Astrocyte of the cerebellum (primary cell): ENCODE measurements at regions of chr12 and their contacts with region 1.

Region 1: DNA sequence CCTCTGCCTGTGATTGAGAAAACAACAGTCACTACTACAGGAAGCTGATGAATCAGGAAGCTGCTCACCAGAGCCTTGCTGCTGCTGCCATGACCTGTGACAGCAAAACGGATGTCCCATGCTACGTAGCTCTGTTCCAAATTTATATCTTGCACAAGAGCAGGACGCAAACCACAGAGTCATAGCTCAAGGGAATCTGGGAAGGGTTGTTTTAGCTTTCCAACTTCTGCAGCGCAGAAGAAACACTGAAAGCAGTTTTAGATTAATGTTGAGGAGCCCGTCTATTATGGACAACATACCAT is 1.9 kb upstream of the ANKRD33 start:
- DNase-seq: peak; percentile 33
- H3K4me3 ChIP-seq: no peak overlapping the region
- CTCF ChIP-seq: no peak

Region 2: DNA sequence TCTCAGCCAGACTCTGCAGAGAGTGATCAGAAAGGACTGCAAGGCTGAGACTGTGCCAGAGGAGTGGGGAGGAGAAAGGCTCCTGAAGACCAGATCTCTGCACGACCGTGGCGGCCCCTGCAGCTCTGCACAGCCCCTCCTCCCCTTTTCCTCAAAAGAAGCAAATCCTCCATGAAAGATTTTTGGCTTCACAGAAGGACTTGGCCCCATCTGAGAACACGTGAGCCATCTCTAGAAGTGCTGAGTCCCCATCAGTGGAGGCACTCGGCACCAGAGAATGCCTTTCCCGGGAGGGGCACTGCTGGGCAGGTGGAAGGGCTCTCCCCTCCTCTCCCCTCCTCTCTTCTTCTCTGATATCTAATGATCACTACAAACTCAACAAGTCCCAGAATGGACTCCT is 44.2 kb before region 1 on chr12:
- in situ Hi-C with region 1: loop called (anchors 5 kb)
- DNase-seq: no peak
- H3K4me3 ChIP-seq: no peak overlapping the region
- CTCF ChIP-seq: no peak

Region 3: DNA sequence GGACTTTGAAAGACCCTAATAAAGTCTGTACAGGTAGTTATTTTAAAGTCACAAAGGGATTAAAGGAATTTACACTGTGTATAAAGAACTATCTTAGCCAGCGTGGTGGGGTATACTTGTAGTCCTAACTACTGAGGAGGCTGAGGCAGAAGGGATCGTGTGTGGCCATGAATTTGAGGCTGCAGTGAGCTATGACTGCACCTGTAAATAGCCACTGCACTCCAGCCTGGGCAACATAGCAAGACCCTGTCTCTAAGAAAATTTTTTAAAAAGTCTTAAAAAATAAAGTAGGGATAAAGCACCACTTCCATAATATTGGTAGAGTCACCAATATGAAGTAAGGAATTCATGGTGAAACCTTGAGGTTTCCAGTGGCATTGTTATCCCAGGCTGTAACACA is 83.7 kb after region 1 on chr12:
- in situ Hi-C with region 1: loop called (anchors 5 kb)
- DNase-seq: no peak
- H3K4me3 ChIP-seq: no peak overlapping the region
- CTCF ChIP-seq: no peak